Left colon (tissue), 2 donors: ENCODE measurements at regions of chr17 and their contacts with region 1.

Region 1: DNA sequence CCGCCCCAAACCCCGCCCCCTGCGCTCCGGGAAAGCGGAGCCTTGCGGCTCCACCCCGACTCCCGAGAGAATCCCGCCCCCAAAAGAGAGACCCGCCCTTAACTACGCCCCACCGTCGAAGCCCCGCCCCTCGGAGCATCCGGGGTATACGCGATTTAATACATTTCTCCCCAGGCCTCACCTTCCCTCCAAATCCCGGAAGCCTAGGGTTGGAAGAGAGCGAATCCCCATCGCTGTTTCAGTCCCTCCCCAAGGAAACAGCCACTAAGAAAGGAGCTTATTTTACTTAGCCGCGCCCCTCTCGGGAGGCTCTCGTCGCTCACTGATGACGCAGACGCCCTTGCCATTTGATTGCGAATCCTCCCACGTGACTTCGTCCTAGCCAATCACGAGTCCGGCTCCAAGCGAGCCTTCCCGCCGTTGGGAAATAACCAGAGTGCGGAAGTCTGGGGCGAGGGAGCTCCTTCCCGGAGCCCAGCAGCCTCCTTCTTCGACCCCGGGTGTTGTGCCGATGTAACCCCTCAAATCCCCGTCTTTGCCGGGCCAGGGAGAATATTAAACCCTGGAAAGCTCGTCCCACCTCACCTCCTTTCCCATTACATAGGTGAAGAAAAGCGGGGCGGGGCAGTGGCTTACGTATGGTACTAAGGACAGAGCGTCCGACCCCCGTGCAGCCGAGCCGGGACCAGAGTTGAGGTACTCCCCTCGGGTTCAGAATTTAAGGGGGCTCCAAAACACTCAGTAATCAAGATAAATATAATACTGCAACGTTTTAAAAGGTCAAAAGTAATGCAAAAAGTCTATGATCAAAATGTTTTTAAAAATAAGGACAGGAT is 462 bp upstream of the FDXR start:
- DNase-seq: peak; percentile 100
- ATAC-seq: peak; percentile 90

Region 2: GRCh38 chr17:74748529-74749365 is 124.5 kb before region 1 on chr17 and contains the start of gene NHERF1:
- intact Hi-C with region 1: loop called (anchors 5 kb)
- DNase-seq: peak; percentile 92 to 96
- ATAC-seq: peak; percentile 73
- total RNA-seq, gene NHERF1: 186 to 256 TPM

Region 3: DNA sequence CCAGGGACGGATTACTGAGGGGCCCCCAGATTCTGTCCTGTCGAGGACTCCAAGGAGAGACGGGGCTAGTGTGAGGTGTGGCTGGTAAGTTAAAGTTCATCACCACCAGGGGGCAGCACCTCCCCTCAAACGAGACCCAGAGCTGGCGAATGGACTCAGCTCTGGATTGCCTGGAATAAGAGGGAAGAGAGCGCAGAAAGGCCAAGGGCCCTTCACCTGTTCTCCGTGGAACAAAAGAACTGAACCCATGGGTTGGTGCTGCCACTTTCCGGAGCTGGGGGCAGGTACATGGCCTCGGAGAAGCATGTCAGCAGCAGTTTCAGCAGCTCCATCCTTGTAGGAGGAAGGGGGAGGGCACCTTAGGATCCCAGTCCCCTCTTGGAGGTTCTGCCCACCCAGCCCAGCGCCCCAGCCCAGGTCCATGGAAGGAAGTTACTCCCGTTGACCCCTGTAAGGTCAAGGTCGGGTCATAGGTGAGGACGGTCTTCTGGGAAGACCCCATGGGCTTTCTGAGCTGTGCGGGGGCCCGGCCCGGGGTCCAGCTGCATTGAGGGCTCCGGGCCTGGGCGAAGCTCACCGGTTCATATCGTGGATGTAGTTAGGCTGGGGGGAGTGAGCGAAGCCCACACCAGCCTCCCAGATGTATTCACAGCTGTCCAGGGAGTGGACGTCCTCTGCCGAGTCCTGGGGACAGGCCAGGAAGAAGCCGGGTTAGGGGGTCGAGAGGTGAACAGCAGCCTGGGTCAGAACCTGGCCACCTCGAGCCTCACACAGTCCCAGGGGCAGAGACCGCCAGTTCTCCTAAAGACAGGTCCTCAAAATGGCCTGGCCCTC is 88.6 kb after region 1 on chr17:
- intact Hi-C with region 1: no loop called
- DNase-seq: peak; percentile 82 to 93
- ATAC-seq: peak; percentile 76

Region 4: DNA sequence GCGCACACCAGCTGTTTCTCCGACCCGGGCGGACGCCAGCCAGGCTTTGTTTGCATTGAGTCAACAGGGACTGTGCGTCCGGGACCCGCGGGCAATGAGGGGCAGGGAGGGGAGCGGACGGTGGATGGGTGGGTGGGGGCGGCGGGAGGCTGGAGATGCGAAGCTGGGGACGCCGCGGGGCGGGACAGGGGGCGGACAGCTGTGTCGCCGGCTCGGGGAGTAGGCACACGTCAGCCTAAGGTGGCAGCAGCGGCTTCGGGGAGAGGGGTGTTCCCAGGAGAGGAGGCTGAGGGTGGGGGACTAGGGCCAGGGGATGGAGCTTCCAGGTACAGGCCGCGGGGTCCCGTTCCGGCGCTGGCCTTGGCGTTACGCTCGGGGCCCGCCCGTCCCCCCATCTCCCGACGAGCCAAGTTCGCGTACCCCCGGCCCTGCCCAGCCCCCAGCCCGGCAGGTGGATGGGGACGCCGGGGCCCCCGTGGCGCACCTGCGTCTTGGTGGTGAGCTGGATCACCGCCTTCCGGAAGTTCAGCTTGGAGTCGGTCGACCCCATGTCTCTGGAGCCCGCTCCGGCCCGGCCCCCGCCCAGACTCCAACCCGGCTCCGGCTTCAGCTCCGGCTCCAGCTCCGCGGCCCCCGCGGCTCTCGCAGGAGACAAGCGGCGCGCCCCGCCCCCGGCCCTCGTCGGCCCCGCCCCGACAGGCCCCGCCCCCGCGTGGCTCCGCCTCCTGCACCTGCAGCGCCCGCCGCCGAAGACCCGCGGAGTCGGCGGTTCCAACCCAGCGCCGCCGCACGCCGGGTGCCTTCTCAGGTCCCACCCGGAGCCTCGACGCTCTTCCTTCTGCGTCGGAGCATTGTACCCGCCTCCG is 99.1 kb after region 1 on chr17 and contains the start of gene HID1:
- intact Hi-C with region 1: no loop called
- DNase-seq: peak; percentile 71 to 87
- ATAC-seq: peak; percentile 80
- total RNA-seq, gene HID1: 55.4 to 69.3 TPM